ENCODE measurements at regions of chr17 and their contacts with region 1.

Region 1: GRCh38 chr17:57440522-57441485 is 184.5 kb downstream of the MSI2 start:
- DNase-seq: peak; percentile 90
- H3K4me3 Mint-ChIP-seq: peak overlapping the region; percentile 78
- H3K27ac Mint-ChIP-seq: peak overlapping the region; percentile 93
- H3K4me1 Mint-ChIP-seq: peaks cover 77% of the 10 kb centered on the region
- H3K27me3 Mint-ChIP-seq: no peaks in the 10 kb centered on the region

Region 2: GRCh38 chr17:57243171-57243948 is 197.4 kb before region 1 on chr17:
- intact Hi-C with region 1: loop called (anchors 1 kb)
- DNase-seq: peak; percentile 93
- H3K4me3 Mint-ChIP-seq: no peak overlapping the region
- H3K27ac Mint-ChIP-seq: peak overlapping the region; percentile 64
- H3K4me1 Mint-ChIP-seq: peaks cover 7% of the 10 kb centered on the region
- H3K27me3 Mint-ChIP-seq: peaks cover 23% of the 10 kb centered on the region

Region 3: GRCh38 chr17:57255776-57256681 is 184.8 kb before region 1 on chr17 and contains the start of gene MSI2:
- intact Hi-C with region 1: loop called (anchors 1 kb)
- DNase-seq: peak; percentile 97
- H3K4me3 Mint-ChIP-seq: peak within 1 kb of the TSS; percentile 89
- H3K27ac Mint-ChIP-seq: peak within 1 kb of the TSS; percentile 91
- H3K4me1 Mint-ChIP-seq: peaks cover 42% of the 10 kb centered on the region
- H3K27me3 Mint-ChIP-seq: peaks cover 7% of the 10 kb centered on the region
- total RNA-seq, gene MSI2: 171 and 172 TPM in 2 replicates

Region 4: DNA sequence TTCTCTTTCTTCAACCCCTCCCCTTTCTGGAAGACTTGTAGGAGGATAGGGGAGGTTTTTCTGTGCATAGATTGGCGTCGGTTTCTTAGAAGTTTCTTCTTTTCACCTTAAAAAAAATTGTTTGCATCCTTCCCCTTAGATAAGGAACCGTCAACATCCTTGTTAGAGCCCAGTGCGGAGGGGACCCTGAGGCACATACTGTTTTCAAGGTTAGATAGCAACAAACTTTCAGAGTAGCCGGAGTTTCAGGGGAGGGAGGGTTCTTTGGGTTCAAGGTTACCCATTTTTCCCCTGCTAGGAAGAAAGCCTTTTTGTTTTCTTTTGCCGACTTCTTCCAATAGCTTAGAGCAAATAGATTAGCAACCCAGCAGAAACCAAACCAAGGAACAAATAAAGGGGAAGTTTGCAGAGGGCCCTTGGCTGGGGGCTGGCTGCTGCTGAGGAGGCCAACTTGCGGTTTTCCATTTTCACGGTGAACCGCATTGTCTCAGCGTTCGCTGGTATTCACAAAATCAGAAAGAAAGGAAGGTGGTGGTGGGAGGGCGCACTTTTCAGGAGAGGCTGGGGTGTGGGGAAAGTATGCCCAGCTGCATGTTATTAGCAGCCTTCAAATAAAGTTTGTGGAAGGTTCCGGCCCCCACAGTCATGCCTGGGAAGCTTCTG is 155.7 kb before region 1 on chr17:
- intact Hi-C with region 1: loop called (anchors 1 kb)
- DNase-seq: peak; percentile 90
- H3K4me3 Mint-ChIP-seq: peak overlapping the region; percentile 76
- H3K27ac Mint-ChIP-seq: peak overlapping the region; percentile 91
- H3K4me1 Mint-ChIP-seq: peaks cover 82% of the 10 kb centered on the region
- H3K27me3 Mint-ChIP-seq: no peaks in the 10 kb centered on the region

Region 5: DNA sequence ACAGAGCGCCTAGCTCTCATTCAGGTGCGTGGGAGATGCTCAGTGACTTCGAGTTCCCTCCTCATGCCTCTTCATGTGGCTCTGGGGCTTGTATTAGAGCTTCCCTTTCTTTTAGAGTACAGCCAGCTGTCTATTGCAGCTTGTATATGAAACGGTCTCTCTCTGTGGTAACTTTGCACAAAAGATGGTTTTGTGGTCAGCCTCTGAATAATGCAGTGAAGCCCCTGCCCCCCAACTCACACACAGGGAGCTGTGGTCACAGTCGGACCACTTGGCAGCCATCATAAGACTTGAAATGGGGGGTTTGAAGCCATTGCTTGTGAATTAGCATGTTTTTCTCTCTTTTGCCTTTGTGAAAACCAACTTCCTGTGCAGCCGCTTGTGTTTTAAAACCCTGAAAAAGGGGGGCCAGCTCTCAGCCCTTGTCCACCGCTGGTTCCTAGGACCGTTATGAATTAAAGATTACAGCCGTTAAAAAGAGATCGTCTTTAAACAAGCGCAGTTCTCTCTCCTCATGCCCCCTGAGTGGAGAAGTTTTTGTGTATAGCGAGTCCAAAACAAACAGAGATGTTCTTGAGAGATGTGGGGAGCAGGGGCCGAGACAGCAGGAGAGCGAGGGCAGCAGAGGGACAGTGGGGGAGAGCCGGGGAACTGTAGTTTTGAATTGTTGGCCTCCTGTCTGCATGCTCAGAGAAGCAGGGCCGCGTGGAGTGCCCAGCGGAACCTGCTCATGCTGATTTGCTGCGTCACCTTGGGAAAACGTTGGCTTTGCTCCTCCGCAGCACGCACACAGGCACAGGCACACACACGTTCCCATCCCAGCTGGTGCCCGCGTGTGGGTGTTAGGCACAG is 14.5 kb after region 1 on chr17:
- intact Hi-C with region 1: loop called (anchors 1 kb)
- DNase-seq: peak; percentile 78
- H3K4me3 Mint-ChIP-seq: peak overlapping the region; percentile 47
- H3K27ac Mint-ChIP-seq: peak overlapping the region; percentile 94
- H3K4me1 Mint-ChIP-seq: peaks cover 64% of the 10 kb centered on the region
- H3K27me3 Mint-ChIP-seq: no peaks in the 10 kb centered on the region

Region 6: GRCh38 chr17:57463103-57463851 is 22.5 kb after region 1 on chr17:
- intact Hi-C with region 1: loop called (anchors 1 kb)
- DNase-seq: peak; percentile 92
- H3K4me3 Mint-ChIP-seq: peak overlapping the region; percentile 76
- H3K27ac Mint-ChIP-seq: peak overlapping the region; percentile 97
- H3K4me1 Mint-ChIP-seq: peaks cover 73% of the 10 kb centered on the region
- H3K27me3 Mint-ChIP-seq: no peaks in the 10 kb centered on the region

Region 7: DNA sequence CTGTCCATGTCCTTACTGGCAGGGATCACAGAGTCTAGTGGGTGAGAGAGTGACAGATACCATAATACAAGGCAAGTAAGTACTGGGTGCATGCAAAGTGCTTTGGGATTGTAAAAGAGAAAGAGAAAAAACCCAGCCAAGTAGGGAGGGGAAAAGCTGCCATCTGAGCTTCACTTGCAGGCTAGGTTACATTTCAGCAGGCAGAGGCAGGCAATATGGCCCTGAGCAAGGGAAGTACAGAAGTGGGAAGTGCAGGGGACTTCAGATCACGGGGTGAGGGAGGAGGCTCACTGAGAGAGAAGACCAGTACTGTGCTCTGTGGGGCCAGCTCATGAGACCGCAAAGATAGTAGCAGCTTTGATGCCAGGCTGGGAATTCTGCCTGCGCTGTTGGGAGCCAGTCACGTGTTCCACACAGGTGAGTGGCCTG is 46.1 kb after region 1 on chr17:
- intact Hi-C with region 1: loop called (anchors 1 kb)
- DNase-seq: no peak
- H3K4me3 Mint-ChIP-seq: no peak overlapping the region
- H3K27ac Mint-ChIP-seq: peak overlapping the region; percentile 31
- H3K4me1 Mint-ChIP-seq: peaks cover 31% of the 10 kb centered on the region
- H3K27me3 Mint-ChIP-seq: no peaks in the 10 kb centered on the region

Measured in activated CD4-positive, alpha-beta T cell treated with anti-CD3 and anti-CD28 coated beads, Interleukin-2, amount 10 ng/mL, durations not matched to agents 24 days and 14 days (primary cell).